Activated naive CD4-positive, alpha-beta T cell treated with anti-CD3 and anti-CD28 coated beads for 36 hours (primary cell): ENCODE measurements at regions of chr5 and their contacts with region 1.

Region 1: GRCh38 chr5:103582364-103582763 is 19.8 kb upstream of the NUDT12 start:
- DNase-seq: peak; percentile 42
- H3K4me3 Mint-ChIP-seq: no peak overlapping the region
- H3K27ac Mint-ChIP-seq: no peak overlapping the region
- H3K4me1 Mint-ChIP-seq: no peaks in the 10 kb centered on the region
- H3K27me3 Mint-ChIP-seq: peaks cover 3% of the 10 kb centered on the region

Region 2: GRCh38 chr5:104412649-104413246 is 830.4 kb after region 1 on chr5:
- CTCF ChIA-PET with region 1: no interaction called
- intact Hi-C with region 1: loop called (anchors 10 kb)
- DNase-seq: peak; percentile 4
- H3K4me3 Mint-ChIP-seq: no peak overlapping the region
- H3K27ac Mint-ChIP-seq: no peak overlapping the region
- H3K4me1 Mint-ChIP-seq: no peaks in the 10 kb centered on the region
- H3K27me3 Mint-ChIP-seq: no peaks in the 10 kb centered on the region

Region 3: GRCh38 chr5:105057001-105057436 is 1474.7 kb after region 1 on chr5:
- CTCF ChIA-PET with region 1: no interaction called
- intact Hi-C with region 1: no loop called
- DNase-seq: no peak
- H3K4me3 Mint-ChIP-seq: no peak overlapping the region
- H3K27ac Mint-ChIP-seq: no peak overlapping the region
- H3K4me1 Mint-ChIP-seq: no peaks in the 10 kb centered on the region
- H3K27me3 Mint-ChIP-seq: no peaks in the 10 kb centered on the region